ENCODE measurements at regions of chr12 and their contacts with region 1.

Region 1: DNA sequence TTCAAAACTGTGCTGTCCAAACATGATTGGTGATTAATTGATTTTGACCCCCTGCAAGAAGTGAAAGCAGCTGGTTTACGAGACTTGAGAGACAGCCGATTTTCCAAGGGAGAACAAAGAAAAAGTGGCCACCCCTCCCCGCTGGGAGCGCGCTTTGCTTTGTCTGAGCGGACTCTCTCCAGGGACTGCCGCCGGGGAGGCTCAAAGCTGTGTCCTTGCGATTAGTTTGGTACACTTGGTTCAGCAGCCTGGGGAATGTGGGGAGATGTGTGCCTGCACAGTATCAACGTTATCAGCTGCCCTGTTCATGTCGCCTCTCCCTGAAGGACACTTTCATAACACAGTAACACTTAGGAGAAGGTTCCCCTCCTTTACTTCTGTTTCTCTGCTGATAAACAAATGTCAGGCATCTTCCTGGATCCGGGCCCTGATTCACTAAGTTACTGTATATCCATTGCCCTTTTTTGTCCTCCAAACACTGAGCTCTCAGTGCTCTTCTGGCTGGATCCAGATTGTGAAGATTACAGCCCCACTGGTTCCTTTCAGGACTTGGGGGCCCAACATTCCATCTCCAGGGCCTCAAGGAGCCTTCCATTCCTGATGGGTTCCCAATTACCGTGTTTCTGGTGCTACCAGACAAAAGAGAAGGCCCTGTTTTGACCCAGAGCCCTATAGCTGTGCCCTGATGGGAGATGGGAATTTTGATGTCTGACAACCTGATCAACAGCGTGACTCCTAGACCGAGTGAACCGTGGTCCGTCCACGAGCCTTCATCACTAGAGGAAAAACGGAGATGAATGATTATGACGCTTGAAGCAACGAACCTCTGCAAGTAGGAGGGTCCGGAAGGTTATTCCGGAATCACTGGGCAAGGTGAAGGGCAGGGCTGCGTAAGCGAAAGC is 31.7 kb upstream of the TUBA1C start:
- DNase-seq: peak; percentile 81
- ATAC-seq: peak; percentile 83

Region 2: GRCh38 chr12:49069507-49070346 is 163.5 kb before region 1 on chr12 and contains the start of gene RHEBL1:
- intact Hi-C with region 1: loop called (anchors 10 kb)
- DNase-seq: peak; percentile 99
- ATAC-seq: peak; percentile 100
- total RNA-seq, gene RHEBL1: 0.32 TPM

Region 3: DNA sequence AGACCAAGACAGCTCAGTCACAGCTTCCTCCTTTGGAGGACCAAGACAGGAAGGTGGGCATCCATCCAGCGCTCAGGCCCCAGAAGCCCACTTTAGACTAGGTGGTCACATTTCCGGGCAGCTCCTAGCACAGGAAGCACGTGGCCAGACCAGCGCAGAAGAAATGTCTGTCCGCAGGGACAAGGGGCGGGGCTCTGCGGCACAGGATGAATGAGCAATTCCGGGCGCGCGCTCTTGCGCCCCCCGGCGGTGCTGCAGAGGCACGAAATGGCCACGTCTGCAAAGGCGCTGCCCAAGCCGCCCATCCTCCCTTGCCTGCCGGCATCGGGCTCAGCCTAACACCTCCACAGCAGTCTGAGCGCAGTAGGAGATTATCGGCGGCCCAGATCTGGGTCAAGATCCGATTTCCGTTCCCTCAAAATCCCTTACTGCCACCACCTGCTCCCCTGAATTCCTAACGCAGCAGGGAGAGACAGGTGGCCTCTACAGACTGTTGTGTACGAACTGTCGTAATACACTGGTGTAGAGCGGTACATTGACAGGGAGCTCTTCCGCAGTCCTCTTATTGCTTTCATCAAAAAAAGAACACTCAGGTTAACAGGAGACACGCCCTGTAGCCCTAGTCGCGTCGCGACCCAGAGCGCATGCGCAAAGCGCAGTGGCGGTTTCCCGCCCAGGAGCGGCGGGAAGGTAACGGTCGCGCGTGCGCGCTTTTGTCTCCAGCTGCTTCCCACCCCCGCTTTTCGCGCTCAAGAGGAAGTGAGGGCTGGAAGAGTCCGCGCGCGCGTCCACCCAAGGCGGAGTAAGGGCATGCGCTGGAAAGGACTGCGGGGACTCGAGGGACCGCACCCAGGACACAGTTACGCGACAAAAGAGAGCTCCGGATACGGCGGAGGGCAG is 102.8 kb before region 1 on chr12:
- intact Hi-C with region 1: loop called (anchors 10 kb)
- DNase-seq: peak; percentile 97
- ATAC-seq: peak; percentile 86

Region 4: DNA sequence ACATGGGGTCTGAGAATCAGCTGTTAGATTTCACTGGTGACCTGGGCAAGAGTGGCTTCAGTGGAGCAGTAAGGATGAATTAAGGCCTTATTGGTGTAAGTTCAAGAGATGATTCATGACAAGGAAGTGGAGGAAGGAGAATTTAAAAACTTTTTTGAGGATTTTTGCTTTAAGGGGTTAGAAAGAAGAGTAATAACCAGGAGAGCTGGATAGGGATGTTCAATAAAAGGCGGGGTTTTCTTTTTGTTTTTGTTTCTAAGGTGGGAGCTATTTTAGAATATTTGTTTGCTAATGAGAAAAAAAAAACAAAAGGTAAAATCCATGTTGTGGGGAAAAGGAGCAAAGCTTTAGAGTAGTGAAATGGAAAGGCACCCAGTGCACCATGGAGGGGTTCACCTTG is 86.8 kb before region 1 on chr12:
- intact Hi-C with region 1: no loop called
- DNase-seq: no peak
- ATAC-seq: no peak

Region 5: GRCh38 chr12:49188914-49189367 is 44.2 kb before region 1 on chr12 and contains the start of gene TUBA1A:
- intact Hi-C with region 1: loop called (anchors 5 kb)
- DNase-seq: peak; percentile 92
- ATAC-seq: peak; percentile 91
- total RNA-seq, gene TUBA1A: 69.9 TPM

Region 6: GRCh38 chr12:49428793-49429192 is 195.6 kb after region 1 on chr12:
- intact Hi-C with region 1: no loop called
- DNase-seq: no peak
- ATAC-seq: peak; percentile 48

Region 7: GRCh38 chr12:49763006-49763591 is 529.9 kb after region 1 on chr12:
- intact Hi-C with region 1: no loop called
- DNase-seq: peak; percentile 86
- ATAC-seq: peak; percentile 76

Measured in left ventricle myocardium superior (tissue), 1 donor.